WTC11 (cell line): ENCODE measurements at regions of chr12 and their contacts with region 1.

Region 1: GRCh38 chr12:47636908-47637780 is 68.7 kb downstream of the RPAP3 start:
- DNase-seq: peak; percentile 85
- ATAC-seq: peak; percentile 92
- H3K4me3 Mint-ChIP-seq: no peak overlapping the region
- H3K27ac Mint-ChIP-seq: 0 out of 2 replicates have a peak overlapping the region, but pooled peaks have one; percentile 50
- H3K4me1 Mint-ChIP-seq: peaks cover 7% of the 10 kb centered on the region
- H3K27me3 Mint-ChIP-seq: no peaks in the 10 kb centered on the region; the same call in 1 of the 2 replicates
- CTCF ChIP-seq: peak; percentile 74; the same call in 1 of the 2 replicates

Region 2: DNA sequence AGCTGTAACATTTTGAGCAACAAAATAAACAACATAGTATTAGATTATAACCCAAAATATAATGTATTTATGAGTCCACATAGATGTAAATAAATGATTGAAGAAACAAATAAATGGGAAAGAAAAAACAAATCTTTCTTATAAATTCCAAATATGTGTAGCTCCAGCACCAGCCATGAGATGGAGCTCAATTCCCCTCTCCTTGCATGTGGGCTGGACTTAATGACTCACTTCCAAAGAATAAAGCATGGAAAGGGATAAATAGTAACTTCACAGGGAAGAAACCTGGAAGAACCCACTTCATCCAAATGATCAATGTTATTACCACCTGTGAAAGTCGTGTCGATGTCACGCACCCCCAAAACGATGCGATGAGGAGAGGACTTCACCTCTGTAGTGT is 90.1 kb before region 1 on chr12:
- CTCF ChIA-PET with region 1: interaction called, 34 read pairs
- POLR2A ChIA-PET with region 1: no interaction called
- DNase-seq: no peak
- ATAC-seq: peak; percentile 69
- H3K4me3 Mint-ChIP-seq: no peak overlapping the region
- H3K27ac Mint-ChIP-seq: no peak overlapping the region
- H3K4me1 Mint-ChIP-seq: peaks cover 3% of the 10 kb centered on the region; the same call in 1 of the 2 replicates
- H3K27me3 Mint-ChIP-seq: no peaks in the 10 kb centered on the region
- CTCF ChIP-seq: no peak

Region 3: DNA sequence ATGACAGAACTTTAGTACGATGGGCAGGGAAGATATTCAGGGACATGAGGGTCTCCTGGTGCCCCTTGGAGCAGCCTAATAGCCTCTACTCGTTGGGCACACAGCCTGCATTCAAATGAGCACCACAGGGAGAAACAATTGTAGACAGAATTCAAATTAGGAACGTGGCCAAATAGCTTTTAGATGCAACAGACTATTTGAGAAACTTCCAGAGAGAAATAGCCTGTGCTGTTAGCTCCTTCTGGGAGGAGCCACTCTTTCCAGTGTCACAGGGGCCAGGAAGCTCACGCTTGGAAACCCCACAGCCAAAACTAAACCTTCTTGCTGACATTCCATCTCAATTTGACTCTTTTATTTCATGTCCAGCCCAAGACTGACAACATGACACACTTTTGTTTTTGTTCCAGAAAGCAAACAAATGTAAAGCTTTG is 45.8 kb before region 1 on chr12:
- CTCF ChIA-PET with region 1: interaction called, 16 read pairs
- POLR2A ChIA-PET with region 1: no interaction called
- DNase-seq: no peak
- ATAC-seq: 0 out of 2 replicates have a peak, but pooled peaks have one; percentile 32
- H3K4me3 Mint-ChIP-seq: no peak overlapping the region
- H3K27ac Mint-ChIP-seq: no peak overlapping the region
- H3K4me1 Mint-ChIP-seq: peaks cover 13% of the 10 kb centered on the region
- H3K27me3 Mint-ChIP-seq: no peaks in the 10 kb centered on the region; the same call in 1 of the 2 replicates
- CTCF ChIP-seq: no peak

Region 4: GRCh38 chr12:47651368-47652254 is 14.5 kb after region 1 on chr12:
- CTCF ChIA-PET with region 1: interaction called, 41 read pairs
- POLR2A ChIA-PET with region 1: interaction called, 5 read pairs
- DNase-seq: peak; percentile 31
- ATAC-seq: peak; percentile 76
- H3K4me3 Mint-ChIP-seq: no peak overlapping the region
- H3K27ac Mint-ChIP-seq: no peak overlapping the region
- H3K4me1 Mint-ChIP-seq: peaks cover 14% of the 10 kb centered on the region
- H3K27me3 Mint-ChIP-seq: no peaks in the 10 kb centered on the region
- CTCF ChIP-seq: no peak; the same call in 1 of the 2 replicates